A673 (cell line): ENCODE measurements at regions of chr15 and their contacts with region 1.

Region 1: GRCh38 chr15:89472785-89473256 is 23.6 kb downstream of the RHCG start:
- DNase-seq: peak; percentile 79
- H3K4me3 ChIP-seq: no peak overlapping the region
- H3K27ac ChIP-seq: no peak overlapping the region
- H3K4me1 ChIP-seq: peaks cover 13% of the 10 kb centered on the region
- H3K27me3 ChIP-seq: no peaks in the 10 kb centered on the region
- CTCF ChIP-seq: peak; percentile 93

Region 2: DNA sequence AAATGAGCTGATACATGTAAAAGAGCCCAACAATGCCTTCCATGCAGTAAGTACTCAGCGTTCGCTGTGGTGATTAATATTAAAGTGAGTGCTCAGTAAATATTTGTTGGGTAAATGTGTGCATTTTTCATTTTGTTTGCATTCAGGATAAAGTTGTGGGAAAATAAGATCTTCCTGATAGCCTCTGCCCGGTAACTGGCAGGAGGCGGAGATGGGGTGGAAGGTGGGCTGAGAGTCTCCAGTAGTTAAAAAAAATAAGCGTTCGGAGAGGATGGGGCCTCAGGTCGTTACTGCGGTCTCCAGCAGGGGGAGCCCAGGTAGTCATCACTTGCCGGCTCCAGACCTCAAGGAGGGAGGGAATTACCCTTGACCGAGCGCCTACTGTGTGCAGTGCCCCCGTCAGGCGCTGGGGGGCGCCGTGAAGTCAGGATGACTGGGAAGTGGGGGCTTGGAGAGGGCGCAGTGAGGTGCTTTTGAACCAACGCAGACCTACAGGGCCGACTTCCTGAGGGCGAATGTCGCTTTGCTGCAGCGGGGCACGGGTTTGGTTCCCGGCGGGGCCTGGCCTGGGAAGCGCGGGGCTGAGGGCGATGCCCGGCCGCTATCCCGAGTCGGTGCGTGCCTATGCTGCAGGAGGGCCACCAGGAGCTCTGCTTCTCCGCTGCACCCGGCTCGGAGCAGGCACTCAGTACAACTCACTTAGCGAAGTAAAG is 56.5 kb before region 1 on chr15:
- CTCF ChIA-PET with region 1: interaction called, 4 read pairs
- POLR2A ChIA-PET with region 1: no interaction called
- intact Hi-C with region 1: loop called (anchors 2 kb)
- DNase-seq: peak; percentile 93
- H3K4me3 ChIP-seq: no peak overlapping the region
- H3K27ac ChIP-seq: no peak overlapping the region
- H3K4me1 ChIP-seq: no peaks in the 10 kb centered on the region
- H3K27me3 ChIP-seq: peaks cover 27% of the 10 kb centered on the region
- CTCF ChIP-seq: peak; percentile 100

Region 3: GRCh38 chr15:89442671-89443307 is 30.0 kb before region 1 on chr15:
- CTCF ChIA-PET with region 1: interaction called, 5 read pairs
- POLR2A ChIA-PET with region 1: no interaction called
- intact Hi-C with region 1: loop called (anchors 1 kb)
- DNase-seq: peak; percentile 80
- H3K4me3 ChIP-seq: no peak overlapping the region
- H3K27ac ChIP-seq: no peak overlapping the region
- H3K4me1 ChIP-seq: peaks cover 7% of the 10 kb centered on the region
- H3K27me3 ChIP-seq: no peaks in the 10 kb centered on the region
- CTCF ChIP-seq: peak; percentile 90

Region 4: GRCh38 chr15:89450076-89450929 is 22.5 kb before region 1 on chr15:
- CTCF ChIA-PET with region 1: interaction called, 10 read pairs
- POLR2A ChIA-PET with region 1: no interaction called
- intact Hi-C with region 1: no loop called
- DNase-seq: no peak
- H3K4me3 ChIP-seq: no peak overlapping the region
- H3K27ac ChIP-seq: no peak overlapping the region
- H3K4me1 ChIP-seq: no peaks in the 10 kb centered on the region
- H3K27me3 ChIP-seq: no peaks in the 10 kb centered on the region
- CTCF ChIP-seq: no peak